ENCODE measurements at regions of chr17 and their contacts with region 1.

Region 1: GRCh38 chr17:50200457-50201275 is 765 bp downstream of the COL1A1 start:
- DNase-seq: peak; percentile 82 to 88 (median 85)
- ATAC-seq: peak; percentile 94
- H3K4me3 ChIP-seq: peak overlapping the region; percentile 41
- H3K27ac ChIP-seq: no peak overlapping the region; the same call in 2 of the 3 replicates
- H3K4me1 ChIP-seq: peaks cover 11 to 28% of the 10 kb centered on the region in 2 experiments
- H3K27me3 ChIP-seq: peaks cover 6 to 33% of the 10 kb centered on the region in 2 experiments; a peak in 4 of 5 replicates
- CTCF ChIP-seq: peak; percentile 94 to 100 (median 97)
- EP300 ChIP-seq: no peak
- POLR2A ChIP-seq: no peak
- RAD21 ChIP-seq: peak; percentile 100

Region 2: GRCh38 chr17:49616601-49617131 is 584.0 kb before region 1 on chr17:
- CTCF ChIA-PET with region 1: no interaction called
- POLR2A ChIA-PET with region 1: no interaction called
- in situ Hi-C with region 1: no loop called
- intact Hi-C with region 1: no loop called
- DNase-seq: no peak
- ATAC-seq: no peak
- H3K4me3 ChIP-seq: no peak overlapping the region
- H3K27ac ChIP-seq: no peak overlapping the region; the same call in 2 of the 3 replicates
- H3K4me1 ChIP-seq: peaks cover 0 to 6% of the 10 kb centered on the region in 2 experiments; a peak in 1 of 5 replicates
- H3K27me3 ChIP-seq: no peaks in the 10 kb centered on the region
- CTCF ChIP-seq: no peak
- EP300 ChIP-seq: no peak
- POLR2A ChIP-seq: no peak
- RAD21 ChIP-seq: no peak

Region 3: DNA sequence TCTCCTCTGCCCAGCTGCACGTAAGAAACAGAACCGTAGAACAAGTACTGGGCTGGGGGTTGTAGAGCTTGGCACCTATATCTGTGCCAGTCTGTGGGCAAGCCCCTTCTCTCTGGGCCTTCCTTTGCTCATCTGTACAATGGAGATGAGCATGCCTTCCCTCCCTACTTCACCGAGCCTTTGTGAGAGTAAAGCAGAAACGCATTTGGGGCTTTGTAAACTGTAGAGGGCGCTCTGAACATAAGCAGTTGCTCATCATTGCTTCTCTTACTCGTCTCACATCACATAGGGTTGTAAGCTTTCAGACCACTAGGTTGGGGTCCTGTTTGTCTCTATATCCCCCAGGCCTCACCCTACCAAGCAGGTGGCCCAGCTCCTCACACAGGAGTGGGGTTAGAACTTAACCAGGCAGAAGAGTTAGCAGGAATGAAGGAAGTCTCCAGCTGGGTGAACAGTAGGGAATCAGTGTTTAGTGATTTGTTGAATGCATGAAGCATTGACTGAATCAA is 85.8 kb before region 1 on chr17:
- CTCF ChIA-PET with region 1: no interaction called
- POLR2A ChIA-PET with region 1: no interaction called
- in situ Hi-C with region 1: no loop called
- intact Hi-C with region 1: loop called (anchors 2 kb)
- DNase-seq: peak in 3 of 4 experiments; percentile 38 to 76 (median 54)
- ATAC-seq: peak; percentile 64
- H3K4me3 ChIP-seq: no peak overlapping the region
- H3K27ac ChIP-seq: no peak overlapping the region
- H3K4me1 ChIP-seq: peaks cover 0 to 42% of the 10 kb centered on the region in 2 experiments
- H3K27me3 ChIP-seq: peaks cover 20 to 30% of the 10 kb centered on the region in 2 experiments; a peak in 4 of 5 replicates
- CTCF ChIP-seq: peak; percentile 77 to 83 (median 81)
- EP300 ChIP-seq: no peak
- POLR2A ChIP-seq: no peak
- RAD21 ChIP-seq: peak; percentile 29 to 66; a peak in 3 of 4 replicates

Region 4: DNA sequence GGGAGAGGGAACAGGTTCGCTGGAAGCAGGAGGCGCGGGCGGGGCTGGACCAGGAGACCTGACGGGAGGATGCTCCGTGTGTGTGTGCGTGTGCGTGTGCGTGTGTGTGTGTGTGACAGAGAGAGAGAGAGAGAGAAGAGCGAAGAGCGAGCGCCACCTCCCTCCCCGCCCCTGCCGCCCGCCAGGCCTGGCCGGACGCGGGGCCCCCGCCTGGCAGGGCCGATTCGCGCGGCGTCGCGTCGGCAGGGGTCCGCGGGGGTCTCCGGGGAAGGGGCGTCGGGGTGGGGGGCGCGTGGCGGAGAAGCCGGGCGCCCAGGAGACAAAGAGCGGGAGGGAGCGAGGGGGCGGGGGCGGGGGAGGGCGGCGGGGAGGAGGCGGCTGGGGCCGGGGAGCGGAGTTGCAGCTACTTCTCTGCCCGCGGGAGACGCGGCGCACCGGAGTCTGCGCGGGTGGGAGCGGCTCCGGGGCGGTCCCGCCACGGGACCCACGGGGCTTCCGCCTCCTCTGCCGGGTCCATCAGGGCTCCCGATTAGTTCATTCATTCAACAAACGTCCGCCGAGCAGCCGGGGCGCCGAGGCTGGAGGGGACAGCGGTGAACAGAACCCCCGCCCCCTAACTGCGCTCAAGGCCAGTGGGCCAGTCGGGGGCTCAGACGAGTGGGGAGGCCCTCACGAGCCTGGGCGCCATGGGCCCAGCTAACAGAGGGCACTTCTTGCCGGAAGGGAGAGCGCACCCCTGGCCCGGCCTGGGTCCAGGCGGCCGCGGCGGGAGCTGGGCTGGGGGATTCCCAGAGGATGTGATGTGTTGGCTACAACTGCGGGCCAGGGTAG is 70.7 kb before region 1 on chr17 and contains the start of gene SAMD14:
- CTCF ChIA-PET with region 1: no interaction called
- POLR2A ChIA-PET with region 1: no interaction called
- in situ Hi-C with region 1: no loop called
- intact Hi-C with region 1: no loop called
- DNase-seq: peak; percentile 28 to 82 (median 72)
- ATAC-seq: peak; percentile 49; the same call in 2 of the 3 replicates
- H3K4me3 ChIP-seq: no peak within 1 kb of the TSS; the same call in 1 of the 2 replicates
- H3K27ac ChIP-seq: no peak within 1 kb of the TSS
- H3K4me1 ChIP-seq: peaks cover 8 to 29% of the 10 kb centered on the region in 2 experiments
- H3K27me3 ChIP-seq: peaks cover 2 to 15% of the 10 kb centered on the region in 2 experiments; a peak in 3 of 5 replicates
- CTCF ChIP-seq: no peak
- EP300 ChIP-seq: no peak
- POLR2A ChIP-seq: no peak
- RAD21 ChIP-seq: no peak
- polyA plus RNA-seq, gene SAMD14: not detected

Region 5: GRCh38 chr17:50169121-50169764 is 31.4 kb before region 1 on chr17:
- CTCF ChIA-PET with region 1: interaction called, 16 read pairs
- POLR2A ChIA-PET with region 1: interaction called, 3 read pairs
- in situ Hi-C with region 1: no loop called
- intact Hi-C with region 1: loop called (anchors 1 kb)
- DNase-seq: peak; percentile 71 to 80 (median 75)
- ATAC-seq: peak; percentile 81
- H3K4me3 ChIP-seq: no peak overlapping the region
- H3K27ac ChIP-seq: no peak overlapping the region
- H3K4me1 ChIP-seq: peaks cover 0 to 18% of the 10 kb centered on the region in 2 experiments; a peak in 1 of 5 replicates
- H3K27me3 ChIP-seq: peaks cover 2 to 18% of the 10 kb centered on the region in 2 experiments; a peak in 2 of 5 replicates
- CTCF ChIP-seq: peak; percentile 89 to 95 (median 92)
- EP300 ChIP-seq: 0 out of 2 replicates have a peak, but pooled peaks have one; percentile 8
- POLR2A ChIP-seq: no peak
- RAD21 ChIP-seq: peak; percentile 82 to 89

Region 6: GRCh38 chr17:50269477-50270434 is 69.1 kb after region 1 on chr17:
- CTCF ChIA-PET with region 1: interaction called, 147 read pairs
- POLR2A ChIA-PET with region 1: no interaction called
- in situ Hi-C with region 1: loop called (anchors 5 kb)
- intact Hi-C with region 1: loop called (anchors 1 kb)
- DNase-seq: peak; percentile 65 to 77 (median 69)
- ATAC-seq: peak; percentile 84
- H3K4me3 ChIP-seq: no peak overlapping the region
- H3K27ac ChIP-seq: no peak overlapping the region
- H3K4me1 ChIP-seq: peaks cover 12 to 34% of the 10 kb centered on the region in 2 experiments
- H3K27me3 ChIP-seq: peaks cover 0 to 12% of the 10 kb centered on the region in 2 experiments; a peak in 2 of 5 replicates
- CTCF ChIP-seq: peak; percentile 86 to 89 (median 88)
- EP300 ChIP-seq: no peak
- POLR2A ChIP-seq: no peak
- RAD21 ChIP-seq: peak; percentile 63 to 72

Region 7: GRCh38 chr17:50297407-50297865 is 96.8 kb after region 1 on chr17:
- CTCF ChIA-PET with region 1: interaction called, 142 read pairs
- POLR2A ChIA-PET with region 1: interaction called, 3 read pairs
- in situ Hi-C with region 1: no loop called
- intact Hi-C with region 1: loop called (anchors 1 kb)
- DNase-seq: peak; percentile 80 to 86 (median 84)
- ATAC-seq: peak; percentile 99
- H3K4me3 ChIP-seq: no peak overlapping the region
- H3K27ac ChIP-seq: no peak overlapping the region
- H3K4me1 ChIP-seq: no peaks in the 10 kb centered on the region; a peak in 1 of 5 replicates
- H3K27me3 ChIP-seq: peaks cover 5 to 30% of the 10 kb centered on the region in 2 experiments; a peak in 4 of 5 replicates
- CTCF ChIP-seq: peak; percentile 94 to 96 (median 95)
- EP300 ChIP-seq: no peak
- POLR2A ChIP-seq: no peak
- RAD21 ChIP-seq: peak; percentile 99

Region 8: DNA sequence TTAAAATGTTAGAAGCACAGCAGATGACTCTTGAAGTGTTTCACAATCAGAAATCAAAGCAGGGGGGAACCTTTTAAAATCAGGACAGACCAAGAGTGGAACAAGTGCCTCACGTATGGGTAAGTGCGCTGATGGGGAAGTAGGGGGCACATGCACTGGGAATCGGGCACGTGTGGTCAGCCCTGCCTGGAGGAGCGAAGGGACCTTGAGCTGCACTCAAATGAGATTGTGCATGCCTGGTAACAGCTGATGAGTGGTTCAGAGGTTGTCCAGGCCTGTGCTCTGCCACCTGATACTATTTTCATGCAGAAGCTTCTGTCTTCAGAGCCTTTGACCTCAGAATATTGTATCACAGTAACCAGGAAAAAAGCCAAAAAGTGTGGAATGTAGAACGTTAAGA is 131.5 kb after region 1 on chr17:
- CTCF ChIA-PET with region 1: interaction called, 23 read pairs
- POLR2A ChIA-PET with region 1: no interaction called
- in situ Hi-C with region 1: no loop called
- intact Hi-C with region 1: no loop called
- DNase-seq: no peak
- ATAC-seq: no peak
- H3K4me3 ChIP-seq: no peak overlapping the region
- H3K27ac ChIP-seq: no peak overlapping the region
- H3K4me1 ChIP-seq: peaks cover 0 to 3% of the 10 kb centered on the region in 2 experiments; a peak in 3 of 5 replicates
- H3K27me3 ChIP-seq: peaks cover 25 to 55% of the 10 kb centered on the region in 2 experiments
- CTCF ChIP-seq: no peak
- EP300 ChIP-seq: no peak
- POLR2A ChIP-seq: no peak
- RAD21 ChIP-seq: no peak

Region 9: GRCh38 chr17:50394711-50395110 is 194.0 kb after region 1 on chr17:
- CTCF ChIA-PET with region 1: no interaction called
- POLR2A ChIA-PET with region 1: no interaction called
- in situ Hi-C with region 1: no loop called
- intact Hi-C with region 1: no loop called
- DNase-seq: peak in 2 of 4 experiments; percentile 27 to 43
- ATAC-seq: no peak
- H3K4me3 ChIP-seq: no peak overlapping the region; the same call in 1 of the 2 replicates
- H3K27ac ChIP-seq: no peak overlapping the region
- H3K4me1 ChIP-seq: peaks cover 16 to 23% of the 10 kb centered on the region in 2 experiments; a peak in 4 of 5 replicates
- H3K27me3 ChIP-seq: no peaks in the 10 kb centered on the region
- CTCF ChIP-seq: no peak
- EP300 ChIP-seq: no peak
- POLR2A ChIP-seq: no peak
- RAD21 ChIP-seq: no peak

Measured in K562 (cell line).